Colonic mucosa (tissue), 4 donors: ENCODE measurements at regions of chr21 and their contacts with region 1.

Region 1: GRCh38 chr21:38355992-38356797 is 99.4 kb downstream of the KCNJ15 start:
- DNase-seq: peak; percentile 80
- H3K4me3 ChIP-seq: no peak overlapping the region
- H3K27ac ChIP-seq: no peak overlapping the region
- H3K4me1 ChIP-seq: no peaks in the 10 kb centered on the region
- H3K27me3 ChIP-seq: no peaks in the 10 kb centered on the region
- CTCF ChIP-seq: peak; percentile 95

Region 2: DNA sequence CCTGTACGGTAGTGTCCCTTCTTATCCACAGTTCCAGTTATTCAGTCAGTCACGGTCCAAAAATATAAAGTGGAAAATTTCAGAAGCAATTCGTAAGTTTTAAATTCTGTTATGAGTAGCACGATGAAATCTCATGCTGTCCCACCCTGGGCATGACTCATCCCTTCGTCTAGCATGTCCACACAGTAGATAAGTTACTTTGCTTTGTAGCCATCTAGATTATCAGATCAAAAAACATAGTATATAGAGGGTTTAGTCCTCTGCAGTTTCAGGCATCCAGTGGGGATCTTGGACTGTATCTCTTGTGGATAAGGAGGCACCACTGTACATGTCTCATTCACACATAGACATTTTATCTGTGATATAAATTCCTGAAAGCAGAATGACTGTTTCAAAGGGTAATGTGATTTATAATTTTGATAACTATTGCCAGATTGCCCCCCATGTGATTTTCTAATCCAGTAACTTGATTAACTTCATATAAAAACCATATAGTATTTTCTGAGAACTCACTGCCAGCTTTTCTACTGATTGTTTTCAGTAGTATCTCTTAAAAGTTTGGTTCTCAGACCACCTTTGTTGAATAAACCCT is 846.3 kb before region 1 on chr21:
- intact Hi-C with region 1: no loop called
- DNase-seq: no peak
- H3K4me3 ChIP-seq: no peak overlapping the region
- H3K27ac ChIP-seq: no peak overlapping the region
- H3K4me1 ChIP-seq: no peaks in the 10 kb centered on the region
- H3K27me3 ChIP-seq: no peaks in the 10 kb centered on the region
- CTCF ChIP-seq: no peak

Region 3: GRCh38 chr21:37675202-37675801 is 680.9 kb before region 1 on chr21:
- intact Hi-C with region 1: loop called (anchors 5 kb)
- DNase-seq: peak; percentile 45
- H3K4me3 ChIP-seq: no peak overlapping the region
- H3K27ac ChIP-seq: no peak overlapping the region
- H3K4me1 ChIP-seq: no peaks in the 10 kb centered on the region
- H3K27me3 ChIP-seq: no peaks in the 10 kb centered on the region
- CTCF ChIP-seq: peak; percentile 99

Region 4: DNA sequence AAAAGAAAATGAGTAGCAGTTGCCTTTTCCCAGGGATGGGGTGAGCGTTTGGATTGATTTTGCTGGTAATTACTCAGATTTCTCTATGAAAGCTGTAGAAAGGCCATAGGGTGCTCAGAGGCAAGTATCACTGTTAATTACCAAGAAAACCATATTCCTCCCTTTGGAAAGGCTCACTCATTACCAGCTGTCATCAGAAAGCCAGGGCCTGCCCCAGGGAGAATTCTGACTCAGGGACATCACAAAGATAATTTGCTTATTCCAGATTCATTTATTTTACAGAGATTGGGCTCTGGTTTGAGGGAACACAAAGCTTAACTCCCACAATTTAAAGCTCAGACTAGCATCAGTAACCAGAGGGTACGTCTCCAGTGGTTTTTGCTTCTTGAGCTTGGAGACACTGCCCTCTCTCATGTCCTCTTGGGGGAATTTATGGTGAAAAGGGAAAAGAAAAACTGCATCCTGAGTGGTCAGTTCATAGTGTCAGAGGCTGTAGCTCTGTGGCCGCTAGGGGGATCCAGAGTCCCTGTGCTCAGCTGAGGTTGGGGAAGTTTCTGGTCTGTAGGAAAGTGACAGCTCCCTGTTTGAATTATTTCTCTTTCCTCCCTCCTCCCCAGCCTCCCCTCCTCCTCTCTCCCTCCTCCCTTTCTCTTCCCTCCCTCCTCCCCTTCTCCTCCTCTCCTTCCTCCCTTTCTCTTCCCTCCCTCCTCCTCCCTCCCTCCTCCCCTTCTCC is 644.2 kb before region 1 on chr21:
- intact Hi-C with region 1: loop called (anchors 10 kb)
- DNase-seq: peak; percentile 55
- H3K4me3 ChIP-seq: no peak overlapping the region
- H3K27ac ChIP-seq: no peak overlapping the region
- H3K4me1 ChIP-seq: no peaks in the 10 kb centered on the region
- H3K27me3 ChIP-seq: no peaks in the 10 kb centered on the region
- CTCF ChIP-seq: peak; percentile 63

Region 5: GRCh38 chr21:38159355-38159754 is 196.8 kb before region 1 on chr21:
- intact Hi-C with region 1: loop called (anchors 5 kb)
- DNase-seq: peak; percentile 61
- H3K4me3 ChIP-seq: no peak overlapping the region
- H3K27ac ChIP-seq: no peak overlapping the region
- H3K4me1 ChIP-seq: no peaks in the 10 kb centered on the region
- H3K27me3 ChIP-seq: no peaks in the 10 kb centered on the region
- CTCF ChIP-seq: peak; percentile 77

Region 6: DNA sequence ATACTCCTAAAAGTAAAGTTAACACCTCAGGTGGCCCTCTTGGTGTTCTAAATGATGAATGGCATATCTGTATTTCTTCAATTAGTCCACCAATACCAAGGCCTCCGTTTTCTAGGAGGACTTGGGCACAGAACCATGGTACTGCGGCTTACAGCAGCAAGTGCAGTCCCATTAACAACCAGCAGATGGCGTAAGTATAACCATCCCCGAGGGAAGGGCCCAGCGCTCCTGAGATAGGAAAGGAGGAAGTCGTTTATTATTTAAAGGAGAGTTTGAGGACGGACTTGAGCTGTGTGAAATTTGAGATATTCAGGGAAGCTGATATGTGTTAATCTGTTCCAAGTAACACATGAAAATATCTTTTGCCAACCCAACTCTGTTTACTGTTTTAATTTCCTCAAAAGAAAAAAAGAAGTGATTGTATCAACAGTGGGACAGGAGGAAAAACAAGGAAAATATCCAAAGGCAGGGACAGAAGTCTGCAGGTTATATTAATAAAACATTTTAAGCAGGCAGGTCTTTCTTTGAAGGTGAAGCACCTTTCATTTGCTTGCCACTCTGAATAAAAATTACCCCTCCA is 137.1 kb before region 1 on chr21:
- intact Hi-C with region 1: loop called (anchors 1 kb)
- DNase-seq: peak; percentile 78
- H3K4me3 ChIP-seq: no peak overlapping the region
- H3K27ac ChIP-seq: no peak overlapping the region
- H3K4me1 ChIP-seq: no peaks in the 10 kb centered on the region
- H3K27me3 ChIP-seq: no peaks in the 10 kb centered on the region
- CTCF ChIP-seq: peak; percentile 97

Region 7: DNA sequence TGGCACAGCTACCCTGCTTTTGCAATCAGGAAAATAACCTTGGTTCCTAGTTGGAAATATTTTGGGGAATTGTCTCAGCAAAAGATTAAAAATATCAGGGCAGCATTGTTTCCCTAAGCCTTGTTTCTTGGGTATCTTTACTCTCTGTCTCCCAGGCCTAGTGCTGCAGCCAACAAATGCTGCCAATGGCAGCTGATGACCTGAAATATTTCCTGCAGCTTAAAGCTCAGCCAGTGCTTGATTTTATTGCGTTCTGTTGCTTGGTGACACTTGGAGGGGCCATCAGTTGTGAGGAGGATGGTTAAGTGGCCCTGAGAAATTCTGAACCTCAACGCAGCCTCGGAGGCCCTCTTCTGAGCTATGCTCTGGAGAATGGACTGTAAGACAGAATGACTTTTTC is 1197.1 kb after region 1 on chr21:
- intact Hi-C with region 1: no loop called
- DNase-seq: no peak
- H3K4me3 ChIP-seq: no peak overlapping the region
- H3K27ac ChIP-seq: no peak overlapping the region
- H3K4me1 ChIP-seq: no peaks in the 10 kb centered on the region
- H3K27me3 ChIP-seq: no peaks in the 10 kb centered on the region
- CTCF ChIP-seq: no peak